GM10248 (cell line): ENCODE measurements at regions of chr3 and their contacts with region 1.

Region 1: DNA sequence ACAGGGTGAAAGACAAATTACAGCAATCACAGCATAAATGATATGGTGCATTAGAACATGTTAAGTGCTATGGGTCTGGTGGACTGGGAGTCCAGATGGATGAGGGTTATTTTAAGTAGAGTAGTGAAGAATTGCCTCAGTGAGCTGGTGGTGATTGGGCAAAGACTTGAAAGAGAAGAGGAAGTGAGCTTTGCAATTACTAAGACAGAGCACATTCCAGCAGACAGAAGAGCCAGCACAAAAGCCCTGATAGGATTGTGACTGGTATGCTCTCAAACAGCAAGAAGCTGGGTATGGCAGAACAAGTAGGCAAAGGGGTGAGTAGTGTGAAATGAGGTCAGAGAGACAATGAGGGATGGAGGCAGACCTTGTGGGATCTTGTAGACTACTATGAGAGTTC is 2.1 kb upstream of the ACKR4 start:
- DNase-seq: no peak
- CTCF ChIP-seq: no peak

Region 2: GRCh38 chr3:132034486-132035464 is 560.2 kb before region 1 on chr3 and contains the start of gene CPNE4:
- CTCF ChIA-PET with region 1: no interaction called
- POLR2A ChIA-PET with region 1: no interaction called
- DNase-seq: peak; percentile 85
- CTCF ChIP-seq: peak; percentile 50

Region 3: DNA sequence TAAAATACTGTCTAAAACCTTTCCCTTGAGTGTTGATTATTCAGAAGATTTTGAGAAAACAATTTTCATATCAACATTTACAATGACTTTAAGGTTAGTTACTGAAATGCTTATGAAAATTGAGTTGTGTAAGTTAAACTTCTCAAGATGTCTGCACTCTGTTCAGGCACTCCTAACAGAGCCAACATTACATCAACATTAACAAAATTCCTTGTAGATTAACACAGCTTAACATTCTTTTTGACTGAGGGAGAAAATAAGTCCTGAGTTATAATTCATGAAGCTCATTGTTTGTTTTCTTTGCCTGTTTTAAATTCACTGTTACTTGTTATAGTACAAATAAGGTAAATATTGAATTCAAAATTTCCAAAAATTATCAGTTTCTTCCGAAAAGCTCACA is 11.1 kb after region 1 on chr3:
- CTCF ChIA-PET with region 1: interaction called, 12 read pairs
- POLR2A ChIA-PET with region 1: no interaction called
- DNase-seq: no peak
- CTCF ChIP-seq: no peak